ENCODE measurements at regions of chr6 and their contacts with region 1.

Region 1: DNA sequence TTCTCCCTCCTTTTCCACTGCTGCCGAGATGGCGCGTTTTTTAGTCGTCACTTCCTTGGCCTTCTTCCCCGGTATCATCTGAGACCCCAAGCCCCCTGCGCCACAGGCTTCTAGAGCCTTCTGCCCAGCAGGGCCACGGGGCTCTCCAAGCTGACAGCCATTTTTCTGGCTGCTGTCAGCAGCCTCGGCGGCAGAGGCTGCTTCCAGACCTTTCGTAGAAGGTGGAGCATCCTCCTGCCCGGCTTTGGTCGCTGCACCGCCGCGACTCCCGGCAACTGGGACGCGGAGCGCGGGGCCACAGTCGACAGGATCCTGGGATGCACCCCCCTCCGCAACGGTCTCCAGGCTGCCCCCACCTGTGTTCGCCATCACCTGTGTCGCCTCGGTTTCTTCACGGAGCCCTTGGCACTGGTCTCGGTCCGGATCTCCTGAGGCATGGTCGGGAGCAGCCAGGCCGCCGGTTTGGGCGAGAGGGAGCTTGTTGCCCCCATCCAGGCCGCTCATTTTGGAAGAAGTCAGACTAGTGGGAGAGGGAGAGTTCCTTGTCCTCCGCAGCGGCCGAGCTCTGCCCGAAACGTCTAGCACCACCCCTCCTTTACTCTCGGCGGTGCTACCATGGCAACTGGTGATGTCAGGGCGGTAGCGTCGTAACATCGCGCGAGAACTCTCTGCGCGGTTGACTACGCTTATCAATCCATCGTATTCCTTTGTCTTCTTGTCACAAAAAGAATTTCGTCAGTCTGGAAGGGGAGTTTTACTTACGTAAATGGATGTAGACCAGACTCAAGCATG is at the start of gene TSPYL4:
- DNase-seq: peak; percentile 92
- H3K4me3 Mint-ChIP-seq: no peak within 1 kb of the TSS
- H3K27ac Mint-ChIP-seq: no peak within 1 kb of the TSS
- H3K4me1 Mint-ChIP-seq: peaks cover 17% of the 10 kb centered on the region
- H3K27me3 Mint-ChIP-seq: no peaks in the 10 kb centered on the region
- total RNA-seq, gene TSPYL4: 16.9 TPM

Region 2: GRCh38 chr6:115945306-115945705 is 308.4 kb before region 1 on chr6:
- CTCF ChIA-PET with region 1: no interaction called
- POLR2A ChIA-PET with region 1: no interaction called
- DNase-seq: no peak
- H3K4me3 Mint-ChIP-seq: no peak overlapping the region
- H3K27ac Mint-ChIP-seq: no peak overlapping the region
- H3K4me1 Mint-ChIP-seq: no peaks in the 10 kb centered on the region
- H3K27me3 Mint-ChIP-seq: no peaks in the 10 kb centered on the region

Region 3: GRCh38 chr6:116217069-116217468 is 36.6 kb before region 1 on chr6:
- CTCF ChIA-PET with region 1: interaction called, 10 read pairs
- POLR2A ChIA-PET with region 1: no interaction called
- DNase-seq: no peak
- H3K4me3 Mint-ChIP-seq: no peak overlapping the region
- H3K27ac Mint-ChIP-seq: no peak overlapping the region
- H3K4me1 Mint-ChIP-seq: no peaks in the 10 kb centered on the region
- H3K27me3 Mint-ChIP-seq: no peaks in the 10 kb centered on the region

Region 4: GRCh38 chr6:116268589-116269293 is 15.0 kb after region 1 on chr6:
- CTCF ChIA-PET with region 1: interaction called, 5 read pairs
- POLR2A ChIA-PET with region 1: interaction called, 11 read pairs
- DNase-seq: no peak
- H3K4me3 Mint-ChIP-seq: no peak overlapping the region
- H3K27ac Mint-ChIP-seq: no peak overlapping the region
- H3K4me1 Mint-ChIP-seq: peaks cover 7% of the 10 kb centered on the region
- H3K27me3 Mint-ChIP-seq: no peaks in the 10 kb centered on the region

Region 5: DNA sequence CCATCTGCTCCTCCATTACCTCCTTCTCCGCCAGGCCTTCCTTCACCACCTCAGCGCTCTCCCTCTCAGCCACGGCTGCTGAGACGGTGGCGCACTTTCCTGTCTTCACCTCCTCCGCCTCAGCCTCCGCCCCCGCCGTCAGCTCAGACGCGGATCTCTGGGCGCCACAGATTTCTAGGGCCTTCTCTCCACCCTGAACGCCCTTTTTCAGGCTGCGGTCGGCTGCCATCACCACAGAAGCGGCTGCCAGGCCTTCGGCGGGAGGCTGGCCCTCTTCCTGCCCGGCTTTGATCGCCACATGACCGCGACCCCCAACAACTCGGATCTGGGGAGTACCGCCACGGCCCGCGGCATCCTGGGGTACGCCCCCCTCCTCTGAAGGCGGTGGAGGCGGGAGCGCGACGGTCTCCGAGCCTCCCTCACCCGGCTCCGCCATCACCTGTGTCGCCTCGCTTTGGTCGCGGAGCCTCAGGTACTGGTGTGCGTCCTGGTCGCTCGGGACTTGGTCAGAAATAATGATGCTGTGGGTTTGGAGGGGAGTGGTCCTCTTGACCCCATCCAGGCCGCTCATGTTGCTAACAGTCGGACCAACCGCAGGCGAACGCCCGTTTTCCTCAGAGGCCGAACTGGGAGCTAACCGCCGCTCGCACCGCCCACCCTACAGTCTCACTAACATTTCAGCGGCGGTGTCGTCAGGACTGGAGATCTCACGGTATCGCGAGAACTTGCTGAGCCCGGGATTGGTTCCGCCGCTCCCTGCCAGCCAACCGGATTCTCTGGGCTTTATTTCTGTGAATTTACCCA is 25.8 kb after region 1 on chr6 and contains the start of gene TSPYL1:
- CTCF ChIA-PET with region 1: interaction called, 12 read pairs
- POLR2A ChIA-PET with region 1: interaction called, 98 read pairs
- DNase-seq: peak; percentile 96
- H3K4me3 Mint-ChIP-seq: peak within 1 kb of the TSS; percentile 99
- H3K27ac Mint-ChIP-seq: peak within 1 kb of the TSS; percentile 99
- H3K4me1 Mint-ChIP-seq: peaks cover 51% of the 10 kb centered on the region
- H3K27me3 Mint-ChIP-seq: no peaks in the 10 kb centered on the region
- total RNA-seq, gene TSPYL1: 47.6 to 48.4 TPM